Activated CD8-positive, alpha-beta T cell treated with anti-CD3 and anti-CD28 coated beads for 36 hours (primary cell): ENCODE measurements at regions of chr5 and their contacts with region 1.

Region 1: DNA sequence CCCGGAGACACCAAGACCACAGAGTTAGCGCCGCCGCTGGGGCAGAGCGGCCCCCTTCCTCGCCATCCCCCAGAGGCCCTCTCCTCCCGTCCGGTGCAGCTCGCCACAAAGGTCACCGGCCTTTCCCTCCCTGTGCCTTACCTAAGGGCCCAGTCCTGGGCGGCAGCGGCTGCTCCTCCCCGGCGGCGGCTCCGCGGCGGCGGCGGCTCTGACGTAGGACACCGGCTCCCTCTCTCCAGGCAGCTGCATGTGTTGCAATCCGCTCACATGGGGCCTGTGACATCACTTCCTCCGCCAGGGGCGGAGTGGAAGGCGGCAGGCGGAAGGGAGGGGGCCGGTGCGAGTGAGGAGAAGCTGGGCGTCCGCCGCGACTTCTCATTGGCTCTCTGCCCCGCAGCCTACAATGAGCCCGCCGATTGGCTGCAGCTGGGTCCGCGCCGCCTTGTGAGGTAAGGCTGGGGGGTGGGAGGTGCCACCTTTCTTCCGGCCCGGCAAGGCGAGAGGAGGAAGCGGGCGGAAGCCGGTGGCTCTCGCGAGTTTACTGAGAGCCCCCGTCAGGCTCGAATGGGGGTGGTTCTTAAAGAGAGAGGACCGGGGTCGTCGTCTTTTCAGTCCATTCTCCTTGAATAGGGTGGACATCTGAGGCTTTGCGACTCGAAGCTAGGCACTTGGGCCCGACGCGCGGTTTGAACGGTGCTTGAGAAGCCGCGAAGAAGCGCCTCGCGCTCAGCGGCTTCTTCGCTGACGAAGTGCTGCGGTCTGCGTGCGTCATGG is at the start of gene ETF1:
- DNase-seq: peak; percentile 100
- ATAC-seq: peak; percentile 94
- H3K4me3 Mint-ChIP-seq: peak within 1 kb of the TSS; percentile 99
- H3K27ac Mint-ChIP-seq: peak within 1 kb of the TSS; percentile 100
- H3K4me1 Mint-ChIP-seq: peaks cover 67% of the 10 kb centered on the region
- H3K27me3 Mint-ChIP-seq: no peaks in the 10 kb centered on the region
- CTCF ChIP-seq: no peak
- total RNA-seq, gene ETF1: 154 to 161 TPM

Region 2: DNA sequence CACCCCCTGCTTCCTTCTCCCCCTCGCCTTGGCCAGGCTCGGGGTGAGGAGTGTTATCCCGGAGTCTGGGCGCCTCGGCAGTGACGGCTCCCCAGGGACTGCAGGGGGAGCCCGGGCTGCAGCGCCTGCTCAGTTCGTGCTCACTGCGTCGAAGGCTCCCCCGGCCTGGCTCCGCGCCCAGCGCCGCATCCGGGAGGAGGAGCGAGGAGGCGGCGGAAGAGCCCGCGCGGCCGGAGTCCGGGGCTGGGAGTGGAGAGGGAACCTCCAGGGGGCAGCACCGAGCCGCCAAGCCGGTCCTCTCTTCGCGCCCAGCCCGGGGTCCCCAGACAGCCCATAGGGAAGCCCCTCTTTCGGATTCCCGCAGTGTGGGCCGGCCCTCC is 79.1 kb before region 1 on chr5:
- CTCF ChIA-PET with region 1: interaction called, 6 read pairs
- POLR2A ChIA-PET with region 1: interaction called, 40 read pairs
- intact Hi-C with region 1: loop called (anchors 2 kb)
- DNase-seq: peak; percentile 94
- ATAC-seq: peak; percentile 57
- H3K4me3 Mint-ChIP-seq: peak overlapping the region; percentile 82
- H3K27ac Mint-ChIP-seq: peak overlapping the region; percentile 97
- H3K4me1 Mint-ChIP-seq: peaks cover 53% of the 10 kb centered on the region
- H3K27me3 Mint-ChIP-seq: no peaks in the 10 kb centered on the region
- CTCF ChIP-seq: peak; percentile 94

Region 3: DNA sequence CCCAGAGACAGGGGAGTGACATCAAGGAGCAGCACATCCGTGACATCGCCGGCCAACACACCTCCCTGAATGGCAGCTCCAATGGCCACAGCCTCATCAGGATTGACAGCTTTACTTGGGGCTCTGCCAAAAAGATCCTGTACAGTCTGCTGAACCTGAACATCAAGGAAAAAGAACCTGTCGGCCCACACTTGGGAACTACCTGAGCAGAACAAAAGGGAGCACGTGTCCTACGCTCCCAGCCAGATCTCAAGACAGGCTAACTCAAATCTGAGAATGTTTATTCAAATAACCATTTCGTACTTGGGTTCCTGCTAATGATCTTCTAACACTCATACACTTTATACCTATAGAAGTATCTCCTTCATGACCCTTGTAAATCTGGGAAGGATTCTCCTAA is 16.8 kb after region 1 on chr5:
- CTCF ChIA-PET with region 1: interaction called, 13 read pairs
- POLR2A ChIA-PET with region 1: interaction called, 65 read pairs
- intact Hi-C with region 1: no loop called
- DNase-seq: no peak
- ATAC-seq: no peak
- H3K4me3 Mint-ChIP-seq: no peak overlapping the region
- H3K27ac Mint-ChIP-seq: peak overlapping the region; percentile 75
- H3K4me1 Mint-ChIP-seq: peaks cover 38% of the 10 kb centered on the region
- H3K27me3 Mint-ChIP-seq: no peaks in the 10 kb centered on the region
- CTCF ChIP-seq: no peak

Region 4: DNA sequence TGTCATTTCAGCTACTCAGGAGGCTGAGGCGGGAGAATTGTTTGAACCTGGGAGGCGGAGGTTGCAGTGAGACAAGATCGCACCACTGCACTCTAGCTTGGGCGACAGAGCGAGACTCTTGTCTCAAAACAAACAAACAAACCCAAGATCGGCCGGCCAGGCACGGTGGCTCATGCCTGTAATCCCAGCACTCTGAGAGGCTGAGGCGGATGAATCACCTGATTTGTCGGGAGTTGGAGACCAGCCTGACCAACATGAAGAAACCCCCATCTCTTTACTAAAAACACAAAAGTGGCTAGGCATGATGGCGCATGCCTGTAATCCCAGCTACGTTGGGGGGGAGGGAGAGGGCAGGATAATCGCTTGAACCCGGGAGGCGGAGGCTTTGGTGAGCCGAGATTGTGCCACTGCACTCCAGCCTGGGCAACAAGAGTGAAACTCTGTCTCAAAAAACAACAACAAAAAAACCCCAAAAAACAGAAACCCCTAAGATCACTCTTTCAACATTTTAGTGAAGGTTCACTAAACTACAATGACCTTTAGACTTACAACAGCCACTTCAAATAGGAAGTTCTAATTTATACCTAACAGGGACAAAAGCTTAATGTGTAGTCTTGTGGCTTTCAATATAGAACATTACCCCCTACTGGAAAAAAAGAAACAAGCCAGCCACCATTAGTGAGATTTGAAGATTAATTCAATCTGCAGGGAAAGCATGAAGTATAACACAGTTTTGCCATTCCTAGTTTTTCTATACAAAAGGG is 25.1 kb after region 1 on chr5:
- CTCF ChIA-PET with region 1: interaction called, 14 read pairs
- POLR2A ChIA-PET with region 1: interaction called, 37 read pairs
- intact Hi-C with region 1: no loop called
- DNase-seq: no peak
- ATAC-seq: no peak
- H3K4me3 Mint-ChIP-seq: no peak overlapping the region
- H3K27ac Mint-ChIP-seq: peak overlapping the region; percentile 82
- H3K4me1 Mint-ChIP-seq: peaks cover 81% of the 10 kb centered on the region
- H3K27me3 Mint-ChIP-seq: no peaks in the 10 kb centered on the region
- CTCF ChIP-seq: peak; percentile 32